Panc1 (cell line): ENCODE measurements at regions of chr2 and their contacts with region 1.

Region 1: GRCh38 chr2:53826587-53827397 is 33.0 kb downstream of the GPR75 start:
- DNase-seq: no peak
- ATAC-seq: no peak
- H3K4me3 ChIP-seq: no peak overlapping the region
- H3K27ac ChIP-seq: no peak overlapping the region
- H3K4me1 ChIP-seq: no peaks in the 10 kb centered on the region
- H3K27me3 ChIP-seq: no peaks in the 10 kb centered on the region
- CTCF ChIP-seq: no peak

Region 2: GRCh38 chr2:53422979-53423378 is 403.8 kb before region 1 on chr2:
- CTCF ChIA-PET with region 1: no interaction called
- POLR2A ChIA-PET with region 1: no interaction called
- in situ Hi-C with region 1: no loop called
- intact Hi-C with region 1: loop called (anchors 5 kb)
- DNase-seq: no peak
- ATAC-seq: no peak
- H3K4me3 ChIP-seq: no peak overlapping the region
- H3K27ac ChIP-seq: no peak overlapping the region
- H3K4me1 ChIP-seq: no peaks in the 10 kb centered on the region
- H3K27me3 ChIP-seq: no peaks in the 10 kb centered on the region
- CTCF ChIP-seq: peak; percentile 62

Region 3: DNA sequence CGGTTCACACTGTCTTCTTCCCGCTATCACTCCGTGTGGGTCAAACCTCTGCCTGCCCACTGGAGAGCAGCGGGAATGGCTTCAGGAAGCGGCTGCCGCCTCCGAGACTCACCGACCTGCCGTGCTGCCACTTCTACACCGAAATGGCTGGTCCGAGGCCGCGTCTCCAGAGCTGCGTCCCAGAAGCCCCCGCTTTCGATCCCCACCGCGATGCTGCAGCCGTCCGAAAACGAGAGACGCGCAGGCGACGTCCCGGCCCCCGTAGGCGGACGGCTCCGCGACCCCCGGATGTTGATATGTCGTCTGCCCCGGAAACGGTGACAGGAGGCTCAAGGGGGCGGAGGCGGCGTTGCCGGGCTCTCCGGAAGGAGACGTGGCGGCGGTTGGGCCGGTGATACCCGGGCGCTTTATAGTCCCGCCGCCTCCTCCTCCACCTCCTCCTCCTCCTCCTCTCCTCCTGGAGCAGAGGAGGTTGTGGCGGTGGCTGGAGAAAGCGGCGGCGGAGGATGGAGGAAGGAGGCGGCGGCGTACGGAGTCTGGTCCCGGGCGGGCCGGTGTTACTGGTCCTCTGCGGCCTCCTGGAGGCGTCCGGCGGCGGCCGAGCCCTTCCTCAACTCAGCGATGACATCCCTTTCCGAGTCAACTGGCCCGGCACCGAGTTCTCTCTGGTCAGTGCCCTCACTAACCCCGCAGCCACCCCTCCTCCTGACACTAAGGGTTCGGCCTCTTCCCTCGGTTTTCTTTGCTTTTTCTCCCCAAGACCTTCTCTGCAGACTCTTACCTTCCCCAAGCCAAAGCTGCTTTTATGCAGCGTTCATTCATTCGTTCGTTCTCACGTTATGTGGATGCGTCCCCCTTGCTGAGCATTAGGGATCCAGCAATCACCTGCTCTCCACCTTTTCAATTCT is 39.8 kb before region 1 on chr2 and contains the starts of genes ASB3 and ERLEC1:
- CTCF ChIA-PET with region 1: no interaction called
- POLR2A ChIA-PET with region 1: no interaction called
- in situ Hi-C with region 1: no loop called
- intact Hi-C with region 1: no loop called
- DNase-seq: peak; percentile 59
- ATAC-seq: peak; percentile 99
- H3K4me3 ChIP-seq: peak within 1 kb of the TSS; percentile 96 to 97
- H3K27ac ChIP-seq: peak within 1 kb of the TSS; percentile 94
- H3K4me1 ChIP-seq: peaks cover 21% of the 10 kb centered on the region
- H3K27me3 ChIP-seq: no peaks in the 10 kb centered on the region
- CTCF ChIP-seq: no peak
- total RNA-seq, gene ASB3: 12.9 TPM
- total RNA-seq, gene ERLEC1: 43.9 TPM